WTC11 (cell line): ENCODE measurements at regions of chr6 and their contacts with region 1.

Region 1: DNA sequence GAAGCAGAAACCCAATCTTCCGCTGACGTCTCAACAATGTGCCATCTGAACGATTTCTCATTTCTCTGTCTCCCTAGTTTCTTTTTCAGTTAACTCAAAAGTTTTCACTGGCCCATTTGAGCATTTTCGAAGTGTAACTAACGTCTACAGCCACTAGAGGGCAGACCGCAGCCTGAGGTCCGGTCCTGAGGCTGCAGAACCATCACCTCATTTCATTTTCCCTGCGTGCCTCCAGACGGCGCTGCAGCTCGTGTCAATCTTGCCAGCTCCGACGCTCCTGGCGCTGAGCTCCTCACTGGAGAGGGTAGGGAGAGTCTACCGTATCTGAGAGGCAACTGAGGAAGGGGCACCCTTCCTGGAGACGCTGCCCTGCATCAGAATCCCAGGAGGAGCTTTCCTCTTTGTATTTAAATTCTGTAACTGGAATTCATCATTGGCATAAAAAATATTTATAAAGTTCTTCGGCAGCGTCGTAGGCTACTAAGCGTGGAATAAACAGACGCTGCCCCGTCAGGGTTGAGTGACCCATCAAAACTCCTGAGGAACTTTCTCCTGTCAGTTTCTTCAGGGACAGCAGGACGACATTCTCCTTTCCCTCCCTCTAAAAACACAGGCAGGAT is 28.5 kb upstream of the DTNBP1 start:
- DNase-seq: peak; percentile 83
- ATAC-seq: peak; percentile 100
- H3K4me3 Mint-ChIP-seq: no peak overlapping the region
- H3K27ac Mint-ChIP-seq: no peak overlapping the region
- H3K4me1 Mint-ChIP-seq: peaks cover 16% of the 10 kb centered on the region
- H3K27me3 Mint-ChIP-seq: peaks cover 9% of the 10 kb centered on the region
- CTCF ChIP-seq: peak; percentile 97

Region 2: GRCh38 chr6:15893556-15894268 is 202.4 kb after region 1 on chr6:
- CTCF ChIA-PET with region 1: interaction called, 24 read pairs
- POLR2A ChIA-PET with region 1: no interaction called
- DNase-seq: no peak
- ATAC-seq: 0 out of 2 replicates have a peak, but pooled peaks have one; percentile 13
- H3K4me3 Mint-ChIP-seq: peak overlapping the region; percentile 57
- H3K27ac Mint-ChIP-seq: peak overlapping the region; percentile 80
- H3K4me1 Mint-ChIP-seq: peaks cover 53% of the 10 kb centered on the region
- H3K27me3 Mint-ChIP-seq: no peaks in the 10 kb centered on the region
- CTCF ChIP-seq: peak; percentile 77

Region 3: DNA sequence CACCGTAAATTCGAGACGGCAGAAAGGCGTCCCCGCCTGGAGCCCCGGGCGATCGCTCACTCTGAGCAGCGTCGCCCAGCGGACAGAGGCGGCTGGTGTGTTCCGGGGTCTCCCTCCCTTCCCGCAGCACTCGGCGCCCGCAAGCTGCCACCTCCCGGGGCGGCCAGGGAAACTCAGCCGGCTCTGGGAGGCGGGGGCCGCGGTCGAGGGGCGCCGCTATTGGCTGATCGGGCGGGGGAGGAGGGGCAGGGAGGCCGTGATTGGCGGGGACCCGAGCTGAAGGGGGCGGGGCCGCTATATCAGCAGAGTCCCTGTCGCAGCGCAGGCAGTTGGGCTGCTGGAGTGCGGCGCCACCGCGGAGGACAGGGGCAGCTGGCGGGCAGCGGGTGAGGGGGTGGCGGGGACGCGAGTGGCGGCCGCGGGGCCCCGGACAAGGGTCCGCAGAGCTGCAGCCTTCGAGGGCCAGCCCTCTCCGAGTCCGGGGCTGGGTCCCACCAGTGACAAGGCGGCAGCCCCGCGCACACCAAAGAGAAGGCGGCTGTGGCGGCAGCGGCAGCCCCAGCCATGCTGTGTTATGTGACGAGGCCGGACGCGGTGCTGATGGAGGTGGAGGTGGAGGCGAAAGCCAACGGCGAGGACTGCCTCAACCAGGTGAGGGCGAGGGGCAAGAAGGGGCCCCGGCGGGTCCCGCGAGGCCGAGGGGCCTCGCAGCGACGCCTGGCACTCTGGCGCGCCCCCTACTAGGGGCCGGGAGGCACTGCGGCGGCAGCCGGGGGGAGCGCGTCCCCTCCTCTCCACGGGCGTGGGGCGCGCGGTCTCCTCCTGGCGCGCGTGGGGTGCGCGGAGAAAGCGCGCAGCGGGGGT is 437.6 kb after region 1 on chr6 and contains the start of gene MYLIP:
- CTCF ChIA-PET with region 1: interaction called, 15 read pairs
- POLR2A ChIA-PET with region 1: interaction called, 5 read pairs
- DNase-seq: peak; percentile 97
- ATAC-seq: peak; percentile 89
- H3K4me3 Mint-ChIP-seq: peak within 1 kb of the TSS; percentile 96
- H3K27ac Mint-ChIP-seq: peak within 1 kb of the TSS; percentile 90
- H3K4me1 Mint-ChIP-seq: peaks cover 29% of the 10 kb centered on the region
- H3K27me3 Mint-ChIP-seq: peaks cover 8% of the 10 kb centered on the region
- CTCF ChIP-seq: peak; percentile 41
- total RNA-seq, gene MYLIP: 43.4 to 50.0 TPM (median 44.5 TPM) in 3 replicates

Region 4: GRCh38 chr6:16168858-16169257 is 477.5 kb after region 1 on chr6:
- CTCF ChIA-PET with region 1: interaction called, 16 read pairs
- POLR2A ChIA-PET with region 1: no interaction called
- DNase-seq: no peak
- ATAC-seq: peak; percentile 91
- H3K4me3 Mint-ChIP-seq: no peak overlapping the region
- H3K27ac Mint-ChIP-seq: no peak overlapping the region
- H3K4me1 Mint-ChIP-seq: peaks cover 25% of the 10 kb centered on the region
- H3K27me3 Mint-ChIP-seq: no peaks in the 10 kb centered on the region
- CTCF ChIP-seq: no peak

Region 5: GRCh38 chr6:16200321-16200883 is 509.0 kb after region 1 on chr6:
- CTCF ChIA-PET with region 1: interaction called, 59 read pairs
- POLR2A ChIA-PET with region 1: no interaction called
- DNase-seq: no peak
- ATAC-seq: no peak
- H3K4me3 Mint-ChIP-seq: no peak overlapping the region
- H3K27ac Mint-ChIP-seq: no peak overlapping the region
- H3K4me1 Mint-ChIP-seq: peaks cover 14% of the 10 kb centered on the region
- H3K27me3 Mint-ChIP-seq: no peaks in the 10 kb centered on the region
- CTCF ChIP-seq: no peak

Region 6: GRCh38 chr6:16206595-16207037 is 515.3 kb after region 1 on chr6:
- CTCF ChIA-PET with region 1: interaction called, 59 read pairs
- POLR2A ChIA-PET with region 1: no interaction called
- DNase-seq: peak; percentile 61
- ATAC-seq: peak; percentile 78
- H3K4me3 Mint-ChIP-seq: no peak overlapping the region
- H3K27ac Mint-ChIP-seq: no peak overlapping the region
- H3K4me1 Mint-ChIP-seq: peaks cover 2% of the 10 kb centered on the region; the same call in 1 of the 2 replicates
- H3K27me3 Mint-ChIP-seq: no peaks in the 10 kb centered on the region
- CTCF ChIP-seq: peak; percentile 98

Region 7: GRCh38 chr6:16480763-16481560 is 789.6 kb after region 1 on chr6:
- CTCF ChIA-PET with region 1: interaction called, 10 read pairs
- POLR2A ChIA-PET with region 1: no interaction called
- DNase-seq: no peak
- ATAC-seq: no peak
- H3K4me3 Mint-ChIP-seq: no peak overlapping the region
- H3K27ac Mint-ChIP-seq: no peak overlapping the region
- H3K4me1 Mint-ChIP-seq: peaks cover 12% of the 10 kb centered on the region
- H3K27me3 Mint-ChIP-seq: no peaks in the 10 kb centered on the region
- CTCF ChIP-seq: no peak